ENCODE measurements at regions of chr6 and their contacts with region 1.

Region 1: GRCh38 chr6:42879372-42880239 is at the start of gene RPL7L1:
- DNase-seq: peak; percentile 88
- H3K4me3 Mint-ChIP-seq: peak within 1 kb of the TSS; percentile 87
- H3K27ac Mint-ChIP-seq: peak within 1 kb of the TSS; percentile 99
- H3K4me1 Mint-ChIP-seq: no peaks in the 10 kb centered on the region
- H3K27me3 Mint-ChIP-seq: no peaks in the 10 kb centered on the region
- CTCF ChIP-seq: no peak
- total RNA-seq, gene RPL7L1: 144 and 154 TPM in 2 replicates

Region 2: DNA sequence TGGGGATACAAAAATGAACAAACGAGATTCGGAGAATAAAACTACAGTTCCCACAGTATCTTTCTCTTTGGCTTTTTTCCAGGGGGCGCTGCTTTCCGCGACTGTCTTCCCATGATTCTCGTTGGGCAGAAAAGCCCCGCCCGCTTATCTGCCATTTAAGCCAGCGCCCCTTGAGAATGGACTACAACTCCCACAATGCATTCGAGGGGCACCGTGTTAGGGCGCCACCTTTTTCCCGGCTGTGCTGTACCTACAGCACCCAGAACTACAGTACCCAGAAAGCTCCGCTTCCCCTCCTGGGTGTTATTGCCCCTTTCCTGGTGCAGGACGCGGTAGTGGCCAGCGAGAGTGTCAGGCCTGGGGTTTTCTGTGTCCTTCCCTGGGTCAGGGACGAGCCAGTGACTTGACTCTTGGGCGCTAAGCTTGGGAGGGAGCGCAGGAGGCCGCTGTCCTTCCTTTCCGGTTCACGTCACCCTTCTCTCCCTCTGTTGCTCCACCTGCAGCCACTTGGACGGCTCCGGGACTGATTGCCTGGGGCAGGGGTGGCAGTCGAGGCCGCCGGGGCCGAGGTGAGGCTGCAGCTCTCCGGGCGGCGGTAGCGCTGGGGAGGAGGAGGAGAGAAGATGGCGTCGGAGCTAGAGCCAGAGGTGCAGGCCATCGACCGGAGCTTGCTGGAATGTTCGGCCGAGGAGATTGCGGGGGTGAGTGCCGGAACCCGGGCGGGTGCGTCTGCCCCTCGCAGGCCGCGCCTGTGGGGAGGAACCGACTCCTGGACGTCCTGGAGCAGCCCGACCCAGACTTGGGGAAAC is 315.7 kb before region 1 on chr6 and contains the start of gene UBR2:
- CTCF ChIA-PET with region 1: no interaction called
- intact Hi-C with region 1: loop called (anchors 10 kb)
- DNase-seq: peak; percentile 99
- H3K4me3 Mint-ChIP-seq: peak within 1 kb of the TSS; percentile 83
- H3K27ac Mint-ChIP-seq: peak within 1 kb of the TSS; percentile 70
- H3K4me1 Mint-ChIP-seq: peaks cover 17% of the 10 kb centered on the region
- H3K27me3 Mint-ChIP-seq: no peaks in the 10 kb centered on the region
- CTCF ChIP-seq: peak; percentile 55
- total RNA-seq, gene UBR2: 32.4 and 32.9 TPM in 2 replicates

Region 3: GRCh38 chr6:42661540-42662153 is 218.0 kb before region 1 on chr6:
- CTCF ChIA-PET with region 1: interaction called, 17 read pairs
- intact Hi-C with region 1: loop called (anchors 1 kb)
- DNase-seq: peak; percentile 87
- H3K4me3 Mint-ChIP-seq: no peak overlapping the region
- H3K27ac Mint-ChIP-seq: peak overlapping the region; percentile 30
- H3K4me1 Mint-ChIP-seq: no peaks in the 10 kb centered on the region
- H3K27me3 Mint-ChIP-seq: no peaks in the 10 kb centered on the region
- CTCF ChIP-seq: peak; percentile 92

Region 4: GRCh38 chr6:43013843-43014433 is 134.3 kb after region 1 on chr6 and contains the starts of genes KLHDC3 and MEA1:
- CTCF ChIA-PET with region 1: no interaction called
- intact Hi-C with region 1: no loop called
- DNase-seq: peak; percentile 100
- H3K4me3 Mint-ChIP-seq: peak within 1 kb of the TSS; percentile 97
- H3K27ac Mint-ChIP-seq: peak within 1 kb of the TSS; percentile 85
- H3K4me1 Mint-ChIP-seq: peaks cover 28% of the 10 kb centered on the region
- H3K27me3 Mint-ChIP-seq: no peaks in the 10 kb centered on the region
- CTCF ChIP-seq: no peak
- total RNA-seq, gene KLHDC3: 85.9 and 95.7 TPM in 2 replicates
- total RNA-seq, gene MEA1: 110 and 115 TPM in 2 replicates

Measured in Calu3 (cell line).